Lower leg skin (tissue), 4 donors: ENCODE measurements at regions of chr11 and their contacts with region 1.

Region 1: DNA sequence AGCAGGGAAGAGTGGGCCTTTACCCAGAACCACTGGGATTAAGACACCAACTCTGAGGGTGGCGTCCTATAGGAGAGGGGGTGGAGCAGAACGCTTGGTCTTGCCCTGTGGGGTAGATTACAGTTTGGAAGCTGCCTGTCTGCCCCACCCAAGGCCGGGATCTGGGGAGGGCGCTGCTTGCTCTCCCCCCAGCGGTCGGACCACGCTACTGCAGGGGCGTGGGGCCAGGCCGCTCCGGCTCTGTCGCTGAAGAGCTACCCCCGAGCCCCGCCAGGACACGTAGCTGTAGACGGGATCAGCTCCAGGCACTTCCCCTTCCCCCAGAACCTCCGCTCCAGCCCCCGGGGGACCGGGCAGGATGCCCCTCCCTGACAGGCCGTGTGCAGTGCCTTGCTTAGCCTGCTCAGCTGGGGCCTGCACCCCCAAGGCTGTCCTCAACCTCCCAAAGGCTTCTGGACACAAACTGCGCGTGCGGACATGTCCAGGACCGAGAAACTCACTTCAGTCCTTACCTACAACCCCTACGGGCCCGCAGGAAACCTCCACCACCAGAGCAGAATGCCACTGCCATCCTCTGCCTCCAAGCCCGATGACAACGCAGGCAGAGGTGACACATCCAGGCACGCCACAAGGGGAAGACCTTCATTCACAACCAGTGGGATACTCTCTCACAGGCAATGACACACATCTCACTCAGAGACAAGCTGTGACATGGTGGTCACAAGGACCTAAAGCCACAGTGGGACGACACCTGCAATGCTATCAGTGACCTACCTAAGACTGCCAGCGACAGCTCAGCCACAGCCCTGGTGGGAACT is 3.6 kb downstream of the AHNAK start:
- DNase-seq: peak; percentile 83 to 98
- H3K4me3 ChIP-seq: peak overlapping the region; percentile 99
- CTCF ChIP-seq: peak in 1 of 3 donors; percentile 94
- POLR2A ChIP-seq: no peak

Region 2: GRCh38 chr11:61281581-61282250 is 1261.2 kb before region 1 on chr11:
- intact Hi-C with region 1: no loop called
- DNase-seq: no peak
- H3K4me3 ChIP-seq: no peak overlapping the region
- CTCF ChIP-seq: no peak
- POLR2A ChIP-seq: no peak

Region 3: GRCh38 chr11:62394825-62395538 is 148.0 kb before region 1 on chr11:
- intact Hi-C with region 1: loop called (anchors 5 kb)
- DNase-seq: peak; percentile 87 to 96
- H3K4me3 ChIP-seq: no peak overlapping the region
- CTCF ChIP-seq: peak in 1 of 3 donors; percentile 65
- POLR2A ChIP-seq: no peak

Region 4: GRCh38 chr11:62427630-62428233 is 115.2 kb before region 1 on chr11:
- intact Hi-C with region 1: loop called (anchors 5 kb)
- DNase-seq: no peak
- H3K4me3 ChIP-seq: no peak overlapping the region
- CTCF ChIP-seq: no peak
- POLR2A ChIP-seq: no peak

Region 5: GRCh38 chr11:62497132-62497915 is 45.6 kb before region 1 on chr11:
- intact Hi-C with region 1: loop called (anchors 5 kb)
- DNase-seq: peak in 1 of 2 donors; percentile 34
- H3K4me3 ChIP-seq: no peak overlapping the region
- CTCF ChIP-seq: peak in 1 of 3 donors; percentile 14
- POLR2A ChIP-seq: no peak